Right lobe of liver (tissue), 6 donors: ENCODE measurements at regions of chr9 and their contacts with region 1.

Region 1: DNA sequence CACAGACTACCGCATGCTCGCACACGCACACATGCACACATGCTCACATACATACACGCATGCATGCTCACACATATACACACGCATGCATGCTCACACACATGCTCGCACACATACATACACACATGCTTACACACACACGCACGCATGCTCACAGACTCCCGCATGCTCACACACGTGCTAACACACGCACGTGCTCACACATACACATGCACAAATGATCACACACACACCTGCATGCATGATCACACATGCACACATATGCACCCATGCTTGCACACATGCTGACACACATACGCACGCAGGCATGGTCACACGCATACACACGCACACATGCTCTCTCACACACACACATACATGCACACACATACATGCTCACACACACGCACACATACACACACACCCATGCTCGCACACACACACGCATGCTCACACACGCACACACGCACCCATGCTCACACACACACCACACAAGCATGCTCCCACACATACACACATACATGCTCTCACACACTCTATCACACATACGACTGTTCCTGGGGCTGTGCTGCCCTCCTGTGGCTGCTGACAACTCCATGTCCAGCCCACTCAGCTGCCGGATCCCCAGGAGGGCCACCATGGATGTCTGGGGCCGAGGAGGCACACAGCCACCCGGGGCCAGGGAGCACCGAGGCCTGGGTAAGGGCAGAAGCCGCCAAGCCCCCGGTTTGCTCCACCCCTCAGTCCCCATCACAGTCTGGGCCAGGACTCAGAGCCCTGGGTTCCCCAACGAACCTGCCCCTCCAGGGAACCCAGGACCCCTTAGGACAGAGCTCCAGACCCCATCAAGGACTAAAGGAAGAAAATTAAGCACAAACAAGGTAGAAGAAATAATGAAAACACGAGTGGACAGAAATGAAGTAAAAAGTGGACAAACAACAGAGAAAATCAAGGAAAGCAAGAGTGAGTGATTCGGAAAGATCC is 31.4 kb upstream of the EGFL7 start:
- DNase-seq: peak; percentile 81 to 83 (median 82)
- ATAC-seq: peak; percentile 63 to 77 (median 70)
- H3K4me3 ChIP-seq: no peak overlapping the region
- H3K27ac ChIP-seq: no peak overlapping the region
- H3K4me1 ChIP-seq: peaks cover 0 to 33% (median 6%) of the 10 kb centered on the region in 4 donors
- H3K27me3 ChIP-seq: no peaks in the 10 kb centered on the region
- CTCF ChIP-seq: peak; percentile 78 to 92 (median 86)
- POLR2A ChIP-seq: no peak

Region 2: DNA sequence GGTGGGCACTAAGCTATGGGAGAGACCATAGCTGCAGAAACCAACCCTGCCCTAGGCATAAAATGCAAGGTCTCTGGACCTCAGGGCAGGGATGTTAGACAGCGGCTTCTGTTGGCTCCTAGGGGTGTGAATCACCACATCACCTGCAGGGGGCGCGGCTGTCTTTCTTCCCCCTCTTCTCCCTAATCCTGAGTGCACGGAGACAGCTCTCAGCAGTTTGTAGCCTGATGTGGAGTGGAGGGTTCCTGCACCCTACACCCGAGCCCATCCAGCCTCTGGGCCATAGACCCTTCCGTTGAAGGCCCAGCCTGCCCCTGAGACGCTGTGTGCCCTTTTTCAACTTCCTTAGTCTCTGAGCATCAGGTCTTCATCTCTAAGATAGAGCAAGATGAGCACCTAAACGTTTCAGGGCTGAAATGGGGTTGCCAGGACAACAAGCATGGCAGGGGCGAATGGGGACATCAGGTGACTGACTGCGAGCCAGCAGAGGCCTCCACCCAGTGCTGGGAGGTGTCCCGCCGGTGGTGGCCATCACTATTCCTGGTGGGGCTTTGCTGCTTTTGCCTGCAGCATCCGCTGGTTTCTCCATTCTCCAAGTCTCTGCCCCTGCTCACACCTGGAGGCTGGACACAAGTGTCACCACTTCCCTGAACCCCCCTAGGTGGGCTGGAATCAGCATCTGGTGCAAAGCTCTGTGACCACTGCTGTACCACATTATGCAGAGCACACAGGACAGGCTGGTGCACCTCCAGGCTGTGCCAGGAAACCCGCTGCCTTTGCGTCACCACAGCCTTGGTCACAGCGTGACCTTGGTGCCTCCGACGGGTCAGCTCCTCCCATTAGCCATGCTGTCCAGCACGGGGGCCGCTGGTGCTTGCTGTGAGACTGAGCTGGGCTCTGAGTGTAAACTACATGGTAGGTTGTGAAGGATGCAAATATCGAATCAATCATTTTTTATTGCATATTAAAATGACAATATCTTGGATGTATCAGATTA is 146.0 kb before region 1 on chr9:
- intact Hi-C with region 1: loop called (anchors 2 to 5 kb)
- DNase-seq: peak; percentile 93 to 96 (median 96)
- ATAC-seq: peak; percentile 39 to 58 (median 52)
- H3K4me3 ChIP-seq: peak overlapping the region in 2 of 3 donors; percentile 85 to 86
- H3K27ac ChIP-seq: peak overlapping the region; percentile 93 to 97 (median 96)
- H3K4me1 ChIP-seq: peaks cover 0 to 48% (median 22%) of the 10 kb centered on the region in 4 donors
- H3K27me3 ChIP-seq: no peaks in the 10 kb centered on the region
- CTCF ChIP-seq: peak; percentile 84 to 91 (median 88)
- POLR2A ChIP-seq: peak; percentile 28

Region 3: DNA sequence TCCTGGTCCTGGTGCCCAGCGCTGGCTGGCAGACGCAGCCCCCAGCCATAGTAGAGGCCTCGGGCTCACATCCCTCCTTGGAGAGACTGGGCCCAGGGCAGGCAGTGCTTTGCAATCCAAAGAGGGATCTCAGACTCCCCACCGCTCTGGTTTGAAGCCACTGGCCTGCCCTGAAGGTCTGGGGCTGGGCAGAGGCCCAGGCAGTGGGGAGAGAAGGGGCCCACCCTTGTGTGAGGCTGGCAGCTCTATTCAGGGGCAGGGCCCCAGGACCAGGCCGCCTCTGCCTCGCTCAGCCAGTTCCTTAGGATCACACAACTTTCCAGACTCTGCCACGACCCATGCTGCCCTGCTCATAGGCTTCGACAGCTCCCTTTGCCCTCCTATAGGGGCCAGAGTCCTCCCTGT is 137.8 kb before region 1 on chr9:
- intact Hi-C with region 1: loop called (anchors 2 to 5 kb)
- DNase-seq: peak in 1 of 3 donors; percentile 14
- ATAC-seq: peak in 2 of 4 donors; percentile 12 to 19
- H3K4me3 ChIP-seq: no peak overlapping the region
- H3K27ac ChIP-seq: no peak overlapping the region
- H3K4me1 ChIP-seq: peaks cover 0 to 3% (median under 1%) of the 10 kb centered on the region in 4 donors
- H3K27me3 ChIP-seq: no peaks in the 10 kb centered on the region
- CTCF ChIP-seq: no peak
- POLR2A ChIP-seq: no peak

Region 4: GRCh38 chr9:136545966-136546698 is 85.2 kb before region 1 on chr9 and contains the start of gene NOTCH1:
- intact Hi-C with region 1: loop called in 1 of 2 experiments (anchors 10 kb)
- DNase-seq: peak; percentile 96 to 97 (median 96)
- ATAC-seq: peak; percentile 74 to 82 (median 78)
- H3K4me3 ChIP-seq: peak within 1 kb of the TSS; percentile 71 to 91 (median 85)
- H3K27ac ChIP-seq: peak within 1 kb of the TSS; percentile 85 to 99 (median 98)
- H3K4me1 ChIP-seq: peaks cover 0 to 33% (median 17%) of the 10 kb centered on the region in 4 donors
- H3K27me3 ChIP-seq: no peaks in the 10 kb centered on the region
- CTCF ChIP-seq: peak in 1 of 4 donors; percentile 37
- POLR2A ChIP-seq: peak; percentile 72
- total RNA-seq, gene NOTCH1: 17.4 to 26.2 (median 19.3) TPM

Region 5: DNA sequence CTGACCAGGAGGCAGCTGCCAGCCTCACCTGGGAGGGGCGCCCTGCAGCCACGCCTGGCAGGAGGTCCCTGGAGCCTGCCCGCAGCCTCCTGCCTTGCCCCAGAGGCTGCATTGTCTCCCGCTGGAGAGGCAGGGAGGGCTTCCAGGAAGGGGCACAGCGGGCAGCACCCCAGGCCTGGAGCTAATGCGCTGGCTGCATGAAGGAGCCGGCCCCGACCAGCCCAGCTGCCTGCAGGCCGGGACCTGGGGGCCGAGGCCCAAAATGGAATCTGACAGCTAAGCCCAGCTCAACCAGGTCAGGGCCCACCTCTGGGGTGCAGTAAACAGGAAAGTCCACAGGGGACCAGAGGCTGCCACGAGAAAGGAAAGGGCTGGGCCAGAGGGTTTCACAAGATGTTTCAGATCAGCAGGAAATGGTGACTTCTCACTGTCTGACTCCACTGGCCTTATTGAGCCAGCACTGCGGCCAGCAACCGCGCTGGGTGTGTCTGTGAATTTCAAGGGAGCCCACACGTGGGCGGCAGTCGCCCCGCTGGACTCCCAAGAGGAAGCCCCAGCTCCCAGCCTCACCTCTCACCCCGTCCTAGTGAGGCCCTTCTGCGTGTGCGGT is 66.8 kb before region 1 on chr9:
- intact Hi-C with region 1: no loop called
- DNase-seq: peak in 2 of 3 donors; percentile 75 to 85
- ATAC-seq: peak; percentile 50 to 74 (median 65)
- H3K4me3 ChIP-seq: no peak overlapping the region
- H3K27ac ChIP-seq: peak overlapping the region; percentile 26 to 77 (median 55)
- H3K4me1 ChIP-seq: peaks cover 0 to 33% (median 4%) of the 10 kb centered on the region in 4 donors
- H3K27me3 ChIP-seq: no peaks in the 10 kb centered on the region
- CTCF ChIP-seq: peak; percentile 6 to 38 (median 12)
- POLR2A ChIP-seq: no peak

Region 6: GRCh38 chr9:136679431-136679941 is 48.2 kb after region 1 on chr9:
- intact Hi-C with region 1: no loop called
- DNase-seq: peak; percentile 69 to 82 (median 78)
- ATAC-seq: peak in 3 of 4 donors; percentile 3 to 35 (median 10)
- H3K4me3 ChIP-seq: peak overlapping the region in 1 of 3 donors; percentile 4
- H3K27ac ChIP-seq: peak overlapping the region; percentile 1 to 69 (median 47)
- H3K4me1 ChIP-seq: peaks cover 0 to 70% (median 34%) of the 10 kb centered on the region in 4 donors
- H3K27me3 ChIP-seq: no peaks in the 10 kb centered on the region
- CTCF ChIP-seq: no peak
- POLR2A ChIP-seq: no peak

Region 7: DNA sequence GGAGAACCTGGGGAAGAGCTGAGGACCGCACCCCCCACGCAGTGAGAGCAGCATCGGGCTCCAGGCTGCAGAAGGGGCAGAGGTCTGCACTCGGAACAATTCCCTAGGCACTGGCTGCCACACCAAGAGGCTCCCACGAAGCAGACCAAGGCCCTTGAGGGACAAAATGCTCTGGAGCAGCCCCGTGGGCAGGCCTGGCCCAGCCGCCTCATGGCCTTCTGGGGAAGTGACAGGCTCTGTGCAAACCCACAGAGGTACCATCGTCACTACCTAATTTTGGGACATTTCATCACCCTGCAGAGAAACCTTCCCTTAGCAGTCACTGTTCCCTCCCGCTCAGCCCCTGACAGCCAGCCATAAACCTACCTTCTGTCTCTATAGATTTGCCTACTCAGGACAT is 297.3 kb after region 1 on chr9:
- intact Hi-C with region 1: no loop called
- DNase-seq: peak in 1 of 3 donors; percentile 45
- ATAC-seq: peak; percentile 14 to 28 (median 20)
- H3K4me3 ChIP-seq: no peak overlapping the region
- H3K27ac ChIP-seq: no peak overlapping the region
- H3K4me1 ChIP-seq: no peaks in the 10 kb centered on the region
- H3K27me3 ChIP-seq: no peaks in the 10 kb centered on the region
- CTCF ChIP-seq: no peak
- POLR2A ChIP-seq: no peak